Psoas muscle (tissue), 8 donors: ENCODE measurements at regions of chr16 and their contacts with region 1.

Region 1: GRCh38 chr16:84841770-84842300 is 22.1 kb downstream of the CRISPLD2 start:
- DNase-seq: peak in 1 of 2 donors; percentile 39
- ATAC-seq: no peak
- H3K4me3 ChIP-seq: no peak overlapping the region
- H3K27ac ChIP-seq: no peak overlapping the region
- H3K4me1 ChIP-seq: peaks cover 4% of the 10 kb centered on the region
- H3K27me3 ChIP-seq: peaks cover 0 to 18% (median 0%) of the 10 kb centered on the region in 3 donors
- CTCF ChIP-seq: no peak

Region 2: GRCh38 chr16:84806256-84806889 is 35.5 kb before region 1 on chr16:
- intact Hi-C with region 1: loop called in 1 of 2 experiments (anchors 5 kb)
- DNase-seq: peak in 1 of 2 donors; percentile 77
- ATAC-seq: peak in 3 of 4 donors; percentile 59 to 68 (median 59)
- H3K4me3 ChIP-seq: no peak overlapping the region
- H3K27ac ChIP-seq: no peak overlapping the region
- H3K4me1 ChIP-seq: no peaks in the 10 kb centered on the region
- H3K27me3 ChIP-seq: no peaks in the 10 kb centered on the region
- CTCF ChIP-seq: no peak